ENCODE measurements at regions of chr22 and their contacts with region 1.

Region 1: DNA sequence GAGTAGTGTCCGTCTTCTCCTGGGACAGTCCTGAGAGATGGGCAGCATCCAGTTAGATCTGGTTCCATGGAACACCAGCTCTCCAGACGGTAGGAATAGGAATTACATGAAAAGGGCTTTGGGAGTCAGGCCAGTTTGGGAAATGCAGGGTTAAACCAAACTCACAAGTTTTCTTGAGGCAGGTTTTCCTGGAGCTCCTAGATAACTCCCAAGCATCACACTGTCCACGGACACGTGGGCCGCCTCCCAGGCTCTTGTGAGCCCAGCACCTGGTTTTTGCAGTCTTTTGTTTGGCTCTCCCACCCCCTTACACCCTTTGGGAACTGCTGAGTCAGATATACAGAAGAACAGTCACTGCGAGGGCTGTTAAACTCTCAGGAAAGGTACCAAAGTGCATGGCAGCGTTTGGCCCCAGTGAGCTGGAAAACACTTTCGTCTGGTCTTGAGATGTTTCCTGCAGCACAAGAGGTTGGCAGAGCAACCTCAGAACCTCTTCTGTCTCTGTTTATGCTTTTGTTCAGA is 90.0 kb downstream of the BCR start:
- DNase-seq: no peak
- ATAC-seq: no peak
- H3K4me3 ChIP-seq: no peak overlapping the region
- H3K27ac ChIP-seq: no peak overlapping the region
- H3K4me1 ChIP-seq: peaks cover 0 to 3% (median 0%) of the 10 kb centered on the region in 9 donors
- H3K27me3 ChIP-seq: no peaks in the 10 kb centered on the region
- CTCF ChIP-seq: no peak

Region 2: DNA sequence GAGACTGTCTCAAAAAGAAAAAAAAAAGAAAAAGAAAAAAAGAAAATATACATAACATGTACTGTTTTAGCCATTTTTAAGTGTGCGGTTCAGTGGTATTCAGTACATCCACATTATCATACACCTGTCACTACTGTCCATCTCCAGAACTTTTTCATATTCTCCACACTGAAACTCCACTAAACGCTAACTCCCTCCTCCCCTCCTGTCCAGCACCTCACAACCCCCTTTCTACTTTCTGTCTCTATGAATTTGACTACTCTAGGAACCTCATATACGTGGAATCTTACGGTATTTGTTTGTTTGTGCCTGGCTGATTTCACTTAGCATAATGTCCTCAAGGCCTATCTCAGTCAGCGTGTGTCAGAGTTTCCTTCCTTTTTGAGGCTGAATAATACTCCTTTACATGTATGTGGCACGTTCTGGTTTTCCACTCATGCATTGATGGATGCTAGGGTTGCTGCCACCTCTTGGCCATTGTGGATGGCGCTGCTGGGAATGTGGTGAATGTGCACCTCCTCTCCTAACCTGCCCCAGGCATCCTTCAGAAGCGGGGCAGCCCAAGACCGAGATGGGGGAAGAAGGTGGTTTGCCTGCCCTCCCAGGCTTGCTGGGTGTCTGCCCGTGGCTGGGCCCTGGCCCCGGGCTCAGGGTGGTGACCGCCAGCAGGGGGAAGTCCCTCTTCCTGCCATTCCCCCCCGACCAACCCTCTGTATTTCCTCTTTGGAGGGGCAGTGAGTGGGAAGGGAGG is 29.5 kb before region 1 on chr22:
- intact Hi-C with region 1: loop called in 1 of 10 experiments (anchors 5 kb)
- DNase-seq: no peak
- ATAC-seq: no peak
- H3K4me3 ChIP-seq: no peak overlapping the region
- H3K27ac ChIP-seq: no peak overlapping the region
- H3K4me1 ChIP-seq: peaks cover 17 to 66% (median 28%) of the 10 kb centered on the region in 9 donors
- H3K27me3 ChIP-seq: no peaks in the 10 kb centered on the region
- CTCF ChIP-seq: peak in 5 of 9 donors; percentile 31 to 47 (median 44)